ENCODE measurements at regions of chr11 and their contacts with region 1.

Region 1: GRCh38 chr11:13210424-13210823 is 67.2 kb upstream of the BMAL1 start:
- DNase-seq: peak in 4 of 5 donors; percentile 39 to 58 (median 52)
- ATAC-seq: peak in 3 of 4 donors; percentile 78 to 79 (median 78)
- H3K4me3 ChIP-seq: no peak overlapping the region
- H3K27ac ChIP-seq: no peak overlapping the region
- H3K4me1 ChIP-seq: peaks cover 0 to 28% (median 5%) of the 10 kb centered on the region in 12 donors
- H3K27me3 ChIP-seq: no peaks in the 10 kb centered on the region
- CTCF ChIP-seq: peak; percentile 30 to 73 (median 62)
- POLR2A ChIP-seq: no peak

Region 2: GRCh38 chr11:13335319-13335718 is 124.9 kb after region 1 on chr11:
- intact Hi-C with region 1: loop called in 6 of 10 experiments (anchors 2 to 5 kb)
- DNase-seq: peak in 4 of 5 donors; percentile 48 to 63 (median 57)
- ATAC-seq: peak in 2 of 4 donors; percentile 24 to 38
- H3K4me3 ChIP-seq: no peak overlapping the region
- H3K27ac ChIP-seq: no peak overlapping the region
- H3K4me1 ChIP-seq: peaks cover 3 to 79% (median 41%) of the 10 kb centered on the region in 12 donors
- H3K27me3 ChIP-seq: no peaks in the 10 kb centered on the region
- CTCF ChIP-seq: peak; percentile 62 to 83 (median 78)
- POLR2A ChIP-seq: no peak

Region 3: DNA sequence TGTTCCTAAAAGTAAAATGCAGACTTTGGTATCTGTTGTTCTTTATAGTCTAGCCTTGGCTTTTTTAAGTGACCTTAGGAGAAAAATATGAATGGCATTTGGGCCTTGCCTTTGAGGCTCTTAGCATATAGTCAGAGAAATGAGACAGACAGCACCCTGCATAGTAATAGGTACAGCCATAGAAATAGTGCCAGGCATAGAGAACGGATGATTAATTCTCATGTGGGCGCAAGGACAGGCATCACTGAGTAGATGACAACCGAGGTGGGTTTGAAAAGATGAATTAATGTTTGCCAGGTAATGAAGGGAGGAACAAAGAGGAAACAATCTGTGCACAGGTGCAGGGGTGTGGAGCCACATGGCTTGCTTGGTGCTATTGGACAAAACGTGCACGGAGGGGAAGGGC is 157.6 kb after region 1 on chr11:
- intact Hi-C with region 1: no loop called
- DNase-seq: no peak
- ATAC-seq: no peak
- H3K4me3 ChIP-seq: no peak overlapping the region
- H3K27ac ChIP-seq: no peak overlapping the region
- H3K4me1 ChIP-seq: no peaks in the 10 kb centered on the region
- H3K27me3 ChIP-seq: no peaks in the 10 kb centered on the region
- CTCF ChIP-seq: no peak
- POLR2A ChIP-seq: no peak

Region 4: GRCh38 chr11:13462901-13463778 is 252.7 kb after region 1 on chr11 and contains the start of gene BTBD10:
- intact Hi-C with region 1: loop called in 1 of 10 experiments (anchors 10 kb)
- DNase-seq: peak; percentile 94 to 97 (median 96)
- ATAC-seq: peak; percentile 97 to 100 (median 99)
- H3K4me3 ChIP-seq: peak within 1 kb of the TSS; percentile 68 to 94 (median 80)
- H3K27ac ChIP-seq: peak within 1 kb of the TSS; percentile 61 to 94 (median 89)
- H3K4me1 ChIP-seq: peaks cover 0 to 39% (median 13%) of the 10 kb centered on the region in 12 donors
- H3K27me3 ChIP-seq: no peaks in the 10 kb centered on the region
- CTCF ChIP-seq: peak in 1 of 12 donors; percentile 8
- POLR2A ChIP-seq: peak in 1 of 2 donors; percentile 92
- total RNA-seq, gene BTBD10: 22.6 to 31.4 (median 25.8) TPM

Measured in heart left ventricle (tissue), 16 donors.